ENCODE measurements at regions of chr3 and their contacts with region 1.

Region 1: GRCh38 chr3:36700537-36701248 is 63.7 kb downstream of the DCLK3 start:
- DNase-seq: peak in 3 of 4 donors; percentile 40 to 75 (median 59)
- ATAC-seq: peak; percentile 95
- H3K4me3 ChIP-seq: no peak overlapping the region
- H3K27ac ChIP-seq: no peak overlapping the region
- H3K4me1 ChIP-seq: no peaks in the 10 kb centered on the region
- H3K27me3 ChIP-seq: no peaks in the 10 kb centered on the region
- CTCF ChIP-seq: peak; percentile 66 to 82

Region 2: GRCh38 chr3:35965908-35966307 is 734.8 kb before region 1 on chr3:
- intact Hi-C with region 1: loop called in 1 of 2 experiments (anchors 10 kb)
- DNase-seq: peak in 2 of 4 donors; percentile 35 to 55
- ATAC-seq: peak; percentile 73
- H3K4me3 ChIP-seq: no peak overlapping the region
- H3K27ac ChIP-seq: no peak overlapping the region
- H3K4me1 ChIP-seq: no peaks in the 10 kb centered on the region
- H3K27me3 ChIP-seq: no peaks in the 10 kb centered on the region
- CTCF ChIP-seq: peak; percentile 30 to 41

Region 3: DNA sequence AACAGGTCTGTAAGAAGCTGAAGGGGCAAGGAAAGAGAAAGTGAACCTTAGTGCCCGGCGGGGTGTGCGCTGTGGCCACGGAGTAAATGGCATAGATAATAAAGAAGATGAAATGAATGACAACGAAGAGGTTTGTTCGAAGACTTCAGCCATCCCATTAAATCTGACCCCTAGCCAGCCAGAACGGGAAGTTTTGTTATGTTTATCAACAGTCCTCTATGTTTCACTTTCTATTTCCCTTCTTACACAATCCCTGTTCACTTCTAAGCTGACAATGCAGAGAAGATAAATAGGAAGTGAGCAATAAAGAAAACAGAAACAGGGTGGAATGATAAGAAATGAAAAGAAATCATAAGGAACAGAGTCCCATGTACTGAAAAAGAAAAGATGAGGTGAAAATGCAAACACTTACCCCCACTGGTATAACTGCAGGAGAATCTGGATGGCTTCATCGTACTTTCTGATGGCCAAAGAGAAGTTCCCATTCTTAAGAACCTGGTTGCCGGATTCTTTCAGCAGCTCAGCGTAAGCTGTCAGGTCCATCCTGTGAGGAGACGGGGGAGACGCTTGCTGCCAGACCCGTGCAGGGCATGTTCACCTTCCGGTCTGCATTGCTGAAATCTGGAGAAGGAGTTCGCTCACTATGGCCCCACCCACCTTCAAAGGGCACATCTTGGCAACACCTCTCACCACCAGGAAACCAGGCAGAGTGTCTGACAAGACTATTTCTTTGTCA is 207.4 kb after region 1 on chr3:
- intact Hi-C with region 1: no loop called
- DNase-seq: peak in 2 of 4 donors; percentile 67 to 72
- ATAC-seq: peak; percentile 74
- H3K4me3 ChIP-seq: peak overlapping the region; percentile 40 to 55
- H3K27ac ChIP-seq: peak overlapping the region; percentile 88 to 98
- H3K4me1 ChIP-seq: peaks cover 10 to 66% of the 10 kb centered on the region in 2 donors
- H3K27me3 ChIP-seq: no peaks in the 10 kb centered on the region
- CTCF ChIP-seq: no peak

Region 4: GRCh38 chr3:37154668-37155314 is 454.1 kb after region 1 on chr3:
- intact Hi-C with region 1: no loop called
- DNase-seq: no peak
- ATAC-seq: no peak
- H3K4me3 ChIP-seq: no peak overlapping the region
- H3K27ac ChIP-seq: no peak overlapping the region
- H3K4me1 ChIP-seq: peaks cover under 1% of the 10 kb centered on the region in 2 donors
- H3K27me3 ChIP-seq: no peaks in the 10 kb centered on the region
- CTCF ChIP-seq: no peak